Left ventricle myocardium inferior (tissue), 1 donor: ENCODE measurements at regions of chr4 and their contacts with region 1.

Region 1: GRCh38 chr4:121656269-121656641 is 40.5 kb downstream of the ANXA5 start:
- DNase-seq: peak; percentile 35
- H3K4me3 ChIP-seq: no peak overlapping the region
- H3K27ac ChIP-seq: no peak overlapping the region
- H3K4me1 ChIP-seq: peaks cover 8% of the 10 kb centered on the region
- H3K27me3 ChIP-seq: no peaks in the 10 kb centered on the region
- CTCF ChIP-seq: peak; percentile 55

Region 2: GRCh38 chr4:121484633-121485032 is 171.6 kb before region 1 on chr4:
- intact Hi-C with region 1: loop called (anchors 5 kb)
- DNase-seq: no peak
- H3K4me3 ChIP-seq: no peak overlapping the region
- H3K27ac ChIP-seq: no peak overlapping the region
- H3K4me1 ChIP-seq: no peaks in the 10 kb centered on the region
- H3K27me3 ChIP-seq: no peaks in the 10 kb centered on the region
- CTCF ChIP-seq: peak; percentile 80